Stomach (tissue), 19 donors: ENCODE measurements at regions of chr2 and their contacts with region 1.

Region 1: DNA sequence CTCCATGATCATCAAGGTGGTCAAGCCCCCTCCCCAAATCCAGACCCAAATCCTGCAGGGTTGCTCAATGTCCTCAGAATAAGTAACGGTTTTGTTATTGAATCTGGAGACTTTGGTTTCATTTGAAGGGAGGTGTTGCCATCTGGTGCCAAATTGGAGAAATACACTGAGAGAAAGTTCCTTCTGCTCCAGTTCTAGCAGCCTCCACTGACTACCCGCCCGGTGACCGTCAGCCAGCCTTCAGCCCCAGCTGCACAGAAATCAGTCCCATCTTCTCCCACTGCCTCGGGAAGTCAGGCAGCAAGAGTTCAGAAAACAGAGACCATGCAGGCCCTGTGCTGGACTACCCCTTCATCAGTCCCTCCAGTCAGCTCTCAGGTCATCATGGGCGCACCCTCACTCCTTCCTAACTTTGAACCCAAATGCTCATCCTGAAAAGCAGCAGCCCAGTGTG is 38.7 kb downstream of the PKDCC start:
- DNase-seq: peak; percentile 40 to 88
- H3K4me3 ChIP-seq: no peak overlapping the region
- H3K27ac ChIP-seq: no peak overlapping the region
- H3K4me1 ChIP-seq: peaks cover 2 to 35% (median 22%) of the 10 kb centered on the region in 4 donors
- H3K27me3 ChIP-seq: no peaks in the 10 kb centered on the region
- CTCF ChIP-seq: peak in 5 of 7 experiments; percentile 64 to 91 (median 70)
- EP300 ChIP-seq: no peak
- POLR2A ChIP-seq: no peak

Region 2: DNA sequence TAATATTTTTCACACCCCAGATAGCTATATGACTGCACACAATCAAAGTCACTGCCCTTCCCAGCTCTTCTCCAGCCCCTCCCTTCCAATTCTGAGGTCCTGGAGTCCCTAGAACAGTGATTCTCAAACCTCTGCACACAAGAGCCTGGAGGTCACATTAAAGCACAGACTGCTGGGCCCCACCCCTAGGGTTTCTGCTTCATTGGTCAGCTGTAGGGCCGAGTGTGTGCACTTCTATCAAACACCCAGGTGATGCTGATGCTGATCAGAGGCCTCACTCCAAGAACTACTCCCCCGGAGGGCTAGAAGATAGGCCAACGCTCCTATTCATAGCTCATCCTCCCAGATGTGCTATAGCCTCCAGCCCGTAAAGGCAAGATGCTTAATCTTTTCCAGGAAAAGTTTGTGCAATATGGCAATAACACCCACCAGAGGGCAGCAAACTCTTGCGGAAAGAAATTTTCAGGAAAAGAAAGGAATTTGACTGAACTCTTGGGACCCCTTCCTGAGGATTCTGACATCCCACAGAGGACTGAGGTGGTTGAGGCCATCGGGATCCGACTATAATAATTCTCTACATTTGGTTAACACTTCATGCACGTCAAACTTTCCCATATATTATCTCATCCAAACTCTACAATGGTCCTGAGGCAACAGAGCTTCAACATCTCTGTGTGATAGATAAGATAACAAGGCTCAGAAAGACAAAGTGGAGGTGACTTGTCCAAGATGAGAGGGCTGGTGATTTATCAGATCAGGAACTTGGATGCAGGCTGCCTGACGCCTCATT is 232.9 kb before region 1 on chr2:
- intact Hi-C with region 1: loop called (anchors 5 kb)
- DNase-seq: peak; percentile 47 to 80
- H3K4me3 ChIP-seq: no peak overlapping the region
- H3K27ac ChIP-seq: no peak overlapping the region
- H3K4me1 ChIP-seq: peaks cover 0 to 7% (median 3%) of the 10 kb centered on the region in 4 donors
- H3K27me3 ChIP-seq: no peaks in the 10 kb centered on the region
- CTCF ChIP-seq: peak in 6 of 7 experiments; percentile 5 to 72 (median 61)
- EP300 ChIP-seq: no peak
- POLR2A ChIP-seq: no peak

Region 3: DNA sequence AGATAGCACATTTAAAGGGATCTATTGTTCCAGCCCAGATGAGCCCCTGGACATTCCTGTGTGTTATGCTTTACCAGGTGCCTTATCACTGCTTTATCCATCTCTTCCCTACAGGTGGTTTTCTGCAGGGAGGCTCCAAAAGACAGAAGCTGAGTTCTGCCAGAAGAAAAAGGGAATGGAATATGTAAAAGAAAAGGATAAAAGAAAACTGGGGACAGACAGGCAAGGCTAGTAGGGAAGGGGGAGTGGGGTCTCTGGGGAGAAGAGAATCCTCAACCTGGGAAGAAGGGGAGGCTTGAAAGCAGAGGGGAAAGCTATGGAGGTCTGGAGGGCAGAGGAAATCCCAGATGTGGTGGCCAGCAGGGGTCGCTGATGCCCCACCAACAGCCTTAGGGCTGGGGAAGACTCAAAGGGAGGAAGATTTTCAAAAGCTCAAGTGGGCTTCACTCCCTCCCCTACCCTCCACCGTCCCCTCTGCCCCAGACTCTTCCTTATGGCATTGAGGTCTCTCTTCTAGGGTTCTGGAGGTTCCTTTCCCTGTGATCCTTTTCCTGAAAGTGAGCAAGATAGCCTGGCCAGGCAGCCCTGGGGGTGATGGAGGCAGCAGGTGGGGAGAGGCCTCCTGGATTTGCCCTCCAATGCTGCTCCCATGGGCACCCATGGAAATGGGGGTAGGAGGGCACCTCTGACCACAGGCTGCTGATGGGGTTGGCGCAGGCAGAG is 216.8 kb before region 1 on chr2:
- intact Hi-C with region 1: loop called (anchors 5 kb)
- DNase-seq: peak; percentile 72 to 92
- H3K4me3 ChIP-seq: no peak overlapping the region
- H3K27ac ChIP-seq: no peak overlapping the region
- H3K4me1 ChIP-seq: peaks cover 0 to 14% (median 5%) of the 10 kb centered on the region in 4 donors
- H3K27me3 ChIP-seq: no peaks in the 10 kb centered on the region
- CTCF ChIP-seq: peak in 5 of 7 experiments; percentile 55 to 92 (median 85)
- EP300 ChIP-seq: no peak
- POLR2A ChIP-seq: no peak

Region 4: GRCh38 chr2:41934329-41934958 is 152.1 kb before region 1 on chr2:
- intact Hi-C with region 1: no loop called
- DNase-seq: peak in 1 of 2 donors; percentile 79
- H3K4me3 ChIP-seq: no peak overlapping the region
- H3K27ac ChIP-seq: peak overlapping the region in 4 of 5 donors; percentile 37 to 70 (median 48)
- H3K4me1 ChIP-seq: peaks cover 5 to 53% (median 22%) of the 10 kb centered on the region in 4 donors
- H3K27me3 ChIP-seq: no peaks in the 10 kb centered on the region
- CTCF ChIP-seq: no peak
- EP300 ChIP-seq: no peak
- POLR2A ChIP-seq: no peak